Naive thymus-derived CD4-positive, alpha-beta T cell (primary cell): ENCODE measurements at regions of chr13 and their contacts with region 1.

Region 1: DNA sequence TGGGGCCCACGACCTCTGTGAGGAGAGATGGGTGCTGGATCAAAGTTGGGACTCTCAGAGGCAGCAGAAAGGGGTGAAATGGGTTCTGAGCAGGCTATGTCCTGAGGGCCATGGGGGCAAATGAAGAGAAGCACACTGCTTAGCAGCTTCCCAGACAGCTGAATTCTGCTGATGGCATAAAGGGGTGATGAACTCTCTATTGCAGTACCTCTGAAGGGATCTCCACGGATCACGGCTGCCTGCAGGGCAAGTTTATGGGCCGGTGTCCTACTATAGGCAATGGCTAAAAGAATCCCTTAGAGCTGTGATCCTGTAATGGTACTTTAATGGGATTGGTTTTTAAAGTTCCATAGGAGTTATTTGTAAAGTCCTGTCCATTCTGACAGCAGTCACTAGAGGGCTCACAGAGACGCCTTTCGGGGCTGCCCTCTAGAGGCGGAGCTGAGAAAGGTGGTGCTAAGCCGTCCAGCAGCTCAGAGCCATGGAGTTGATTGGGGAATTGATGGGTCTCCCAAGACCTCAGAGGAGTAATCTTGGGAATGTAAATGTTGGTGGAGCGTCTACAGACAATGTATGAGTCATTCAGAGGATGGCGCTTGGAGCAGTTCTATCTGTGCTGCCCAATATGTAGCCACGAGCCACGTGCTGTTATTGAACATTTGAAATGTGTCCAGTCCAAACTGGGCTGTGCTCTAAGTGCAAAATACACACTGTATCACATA is 287.3 kb downstream of the COG6 start:
- DNase-seq: peak; percentile 41 to 71 (median 63)
- ATAC-seq: peak; percentile 98
- H3K4me3 ChIP-seq: no peak overlapping the region
- H3K4me3 Mint-ChIP-seq: peak overlapping the region in 2 of 10 donors; percentile 2 to 71
- H3K27ac ChIP-seq: no peak overlapping the region
- H3K27ac Mint-ChIP-seq: peak overlapping the region in 3 of 9 donors; percentile 1 to 63 (median 8)
- H3K4me1 ChIP-seq: no peaks in the 10 kb centered on the region
- H3K4me1 Mint-ChIP-seq: peaks cover 4 to 16% (median 11%) of the 10 kb centered on the region in 7 donors
- H3K27me3 ChIP-seq: no peaks in the 10 kb centered on the region
- H3K27me3 Mint-ChIP-seq: peaks cover 0 to 3% (median 0%) of the 10 kb centered on the region in 5 donors

Region 2: DNA sequence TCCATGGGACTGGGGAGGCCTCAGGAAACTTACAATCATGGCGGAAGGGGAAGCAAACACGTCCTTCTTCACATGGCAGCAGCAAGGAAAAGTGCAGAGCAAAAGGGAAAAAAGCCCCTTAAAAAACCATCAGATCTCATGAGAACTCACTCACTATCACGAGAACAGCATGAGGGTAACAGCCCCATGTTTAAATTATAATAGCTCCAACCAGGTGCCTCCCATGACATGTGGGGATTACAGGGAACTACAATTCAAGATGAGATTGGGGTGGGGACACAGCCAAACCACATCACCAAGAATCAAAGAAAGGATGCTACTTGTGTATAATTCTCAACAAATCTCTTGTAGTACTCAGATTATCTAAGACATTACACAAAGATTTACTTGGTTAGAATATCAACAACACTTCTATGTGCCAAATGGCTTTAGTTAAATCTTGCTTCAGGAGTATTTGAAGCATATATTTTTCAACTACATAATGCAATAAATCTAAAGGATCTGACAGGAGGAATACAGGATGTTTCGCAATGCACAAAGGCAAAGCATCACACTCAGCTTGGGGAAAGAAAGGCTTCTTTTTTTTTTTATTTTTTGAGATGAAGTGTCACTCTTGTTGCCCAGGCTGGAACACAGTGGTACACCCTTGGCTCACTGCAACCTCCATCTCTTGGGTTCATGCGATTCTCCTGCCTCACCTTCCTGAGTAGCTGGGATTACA is 519.7 kb before region 1 on chr13:
- CTCF ChIA-PET with region 1: no interaction called
- POLR2A ChIA-PET with region 1: no interaction called
- intact Hi-C with region 1: no loop called
- DNase-seq: no peak
- ATAC-seq: no peak
- H3K4me3 ChIP-seq: no peak overlapping the region
- H3K4me3 Mint-ChIP-seq: no peak overlapping the region
- H3K27ac ChIP-seq: no peak overlapping the region
- H3K27ac Mint-ChIP-seq: no peak overlapping the region
- H3K4me1 ChIP-seq: no peaks in the 10 kb centered on the region
- H3K4me1 Mint-ChIP-seq: peaks cover 0 to 2% (median 0%) of the 10 kb centered on the region in 7 donors
- H3K27me3 ChIP-seq: no peaks in the 10 kb centered on the region
- H3K27me3 Mint-ChIP-seq: peaks cover 8 to 32% (median 19%) of the 10 kb centered on the region in 5 donors

Region 3: GRCh38 chr13:39684531-39685137 is 258.1 kb before region 1 on chr13:
- CTCF ChIA-PET with region 1: interaction called, 5 read pairs
- POLR2A ChIA-PET with region 1: no interaction called
- intact Hi-C with region 1: loop called (anchors 1 to 2 kb)
- DNase-seq: peak in 6 of 9 donors; percentile 6 to 44 (median 34)
- ATAC-seq: peak; percentile 53
- H3K4me3 ChIP-seq: no peak overlapping the region
- H3K4me3 Mint-ChIP-seq: no peak overlapping the region
- H3K27ac ChIP-seq: no peak overlapping the region
- H3K27ac Mint-ChIP-seq: no peak overlapping the region
- H3K4me1 ChIP-seq: no peaks in the 10 kb centered on the region
- H3K4me1 Mint-ChIP-seq: peaks cover 0 to 20% (median 3%) of the 10 kb centered on the region in 7 donors
- H3K27me3 ChIP-seq: no peaks in the 10 kb centered on the region
- H3K27me3 Mint-ChIP-seq: no peaks in the 10 kb centered on the region

Region 4: DNA sequence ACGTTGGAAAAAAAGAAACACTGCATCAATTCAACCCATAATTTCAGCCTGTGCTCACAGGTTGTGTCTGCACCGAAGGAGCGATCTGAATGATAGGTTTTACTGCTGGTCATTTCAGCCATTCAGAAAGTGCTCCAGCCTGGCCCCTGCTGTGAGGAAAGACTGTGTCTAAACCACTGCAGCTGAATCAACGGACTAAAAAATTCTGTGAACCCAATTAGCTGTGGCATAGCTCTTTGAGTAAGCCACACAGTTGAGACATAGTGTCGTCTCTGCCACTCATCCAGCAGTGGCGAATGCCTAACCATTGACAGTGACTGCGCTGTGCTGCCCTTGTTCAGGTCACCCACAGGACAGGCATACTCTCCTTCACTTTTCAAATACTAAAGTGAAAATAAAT is 107.5 kb before region 1 on chr13:
- CTCF ChIA-PET with region 1: no interaction called
- POLR2A ChIA-PET with region 1: no interaction called
- intact Hi-C with region 1: no loop called
- DNase-seq: no peak
- ATAC-seq: no peak
- H3K4me3 ChIP-seq: no peak overlapping the region
- H3K4me3 Mint-ChIP-seq: no peak overlapping the region
- H3K27ac ChIP-seq: no peak overlapping the region
- H3K27ac Mint-ChIP-seq: no peak overlapping the region
- H3K4me1 ChIP-seq: no peaks in the 10 kb centered on the region
- H3K4me1 Mint-ChIP-seq: peaks cover 0 to 7% (median 3%) of the 10 kb centered on the region in 7 donors
- H3K27me3 ChIP-seq: no peaks in the 10 kb centered on the region
- H3K27me3 Mint-ChIP-seq: peaks cover 0 to 5% (median 2%) of the 10 kb centered on the region in 5 donors

Region 5: DNA sequence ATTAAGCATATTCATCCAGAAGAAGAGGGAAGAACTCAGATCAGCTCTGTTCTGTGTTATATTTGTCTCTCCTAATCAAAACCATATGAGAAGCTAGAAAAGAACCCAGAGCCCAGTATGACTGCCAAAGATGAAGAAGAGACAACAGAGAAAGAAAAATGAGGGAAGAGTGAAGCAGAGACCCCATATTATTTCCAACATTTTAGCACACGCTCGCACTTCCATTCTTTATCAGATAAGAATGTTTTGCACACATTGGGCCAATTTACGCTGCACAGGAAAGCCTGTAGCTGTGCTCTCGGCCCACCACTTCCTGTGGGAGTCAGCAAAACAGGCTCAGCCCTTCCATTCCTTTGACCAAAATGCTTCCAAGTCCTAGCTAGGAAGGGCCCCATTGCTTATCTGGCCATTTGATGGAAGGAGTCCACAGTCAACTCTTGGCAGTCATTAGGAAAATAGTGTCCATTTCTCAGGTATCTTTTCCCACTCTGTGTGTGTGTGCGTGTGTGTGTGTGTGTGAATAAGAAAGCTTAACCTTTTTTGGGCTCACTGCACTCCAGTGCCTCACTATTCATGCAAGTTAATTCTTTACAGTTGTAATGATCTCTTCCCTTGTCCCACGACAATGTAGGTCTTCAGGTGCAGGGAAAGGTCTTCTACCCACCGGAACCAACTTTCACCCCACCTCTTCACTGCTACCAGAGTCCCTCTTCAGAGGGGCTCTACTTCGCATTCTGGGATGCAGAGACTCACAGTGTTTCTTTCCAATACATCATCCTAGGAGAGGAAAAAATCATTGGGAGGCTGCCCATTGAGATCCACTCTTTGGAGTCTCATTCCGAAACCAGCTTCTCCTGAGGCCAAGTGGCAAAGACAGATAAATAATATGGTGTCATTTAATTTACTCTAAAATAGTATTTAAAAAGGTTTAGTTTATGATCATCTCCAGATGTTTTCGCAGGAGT is 49.7 kb before region 1 on chr13:
- CTCF ChIA-PET with region 1: interaction called, 6 read pairs
- POLR2A ChIA-PET with region 1: no interaction called
- intact Hi-C with region 1: loop called in 1 of 2 experiments (anchors 2 kb)
- DNase-seq: peak in 8 of 9 donors; percentile 13 to 59 (median 46)
- ATAC-seq: peak; percentile 60
- H3K4me3 ChIP-seq: peak overlapping the region; percentile 31
- H3K4me3 Mint-ChIP-seq: peak overlapping the region; percentile 58 to 82 (median 72)
- H3K27ac ChIP-seq: no peak overlapping the region
- H3K27ac Mint-ChIP-seq: peak overlapping the region; percentile 43 to 86 (median 79)
- H3K4me1 ChIP-seq: peaks cover 0 to 31% of the 10 kb centered on the region in 2 donors
- H3K4me1 Mint-ChIP-seq: peaks cover 20 to 51% (median 43%) of the 10 kb centered on the region in 7 donors
- H3K27me3 ChIP-seq: no peaks in the 10 kb centered on the region
- H3K27me3 Mint-ChIP-seq: peaks cover 0 to 8% (median 0%) of the 10 kb centered on the region in 5 donors

Region 6: GRCh38 chr13:40682449-40683240 is 739.9 kb after region 1 on chr13:
- CTCF ChIA-PET with region 1: interaction called, 33 read pairs
- POLR2A ChIA-PET with region 1: no interaction called
- intact Hi-C with region 1: loop called (anchors 1 kb)
- DNase-seq: peak in 6 of 9 donors; percentile 32 to 60 (median 52)
- ATAC-seq: peak; percentile 52
- H3K4me3 ChIP-seq: no peak overlapping the region
- H3K4me3 Mint-ChIP-seq: peak overlapping the region in 5 of 10 donors; percentile 2 to 45 (median 18)
- H3K27ac ChIP-seq: no peak overlapping the region
- H3K27ac Mint-ChIP-seq: peak overlapping the region in 2 of 9 donors; percentile 37 to 45
- H3K4me1 ChIP-seq: peaks cover 0 to 6% of the 10 kb centered on the region in 2 donors
- H3K4me1 Mint-ChIP-seq: peaks cover 8 to 17% (median 14%) of the 10 kb centered on the region in 7 donors
- H3K27me3 ChIP-seq: no peaks in the 10 kb centered on the region
- H3K27me3 Mint-ChIP-seq: no peaks in the 10 kb centered on the region